HCT116 (cell line): ENCODE measurements at regions of chr7 and their contacts with region 1.

Region 1: DNA sequence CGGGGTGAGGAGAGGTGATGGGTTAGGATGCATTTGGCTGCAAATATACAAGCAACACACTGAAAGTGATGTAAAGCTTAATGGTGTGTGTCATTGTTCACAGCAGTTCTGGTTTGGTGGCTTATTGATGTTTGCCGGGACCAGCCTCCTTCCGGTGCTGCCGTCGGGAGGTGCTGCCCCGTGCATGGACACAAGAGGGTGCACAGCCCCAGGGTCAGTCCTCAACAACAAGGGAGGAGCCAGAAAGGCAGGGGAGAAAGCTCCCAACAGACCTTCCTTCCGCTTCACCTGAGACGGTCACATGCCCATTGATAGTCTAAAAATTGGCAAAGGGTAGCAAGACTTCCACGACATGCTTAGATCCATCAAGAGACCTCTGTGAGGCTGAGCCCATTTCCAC is 9.5 kb downstream of the RNF32 start:
- DNase-seq: peak; percentile 33
- ATAC-seq: peak; percentile 99
- H3K4me3 ChIP-seq: no peak overlapping the region
- H3K27ac ChIP-seq: no peak overlapping the region
- H3K4me1 ChIP-seq: 0 out of 4 replicates have a peak, but pooled peaks cover 0 to 7% of the 10 kb centered on the region in 2 experiments
- H3K27me3 ChIP-seq: no peaks in the 10 kb centered on the region
- CTCF ChIP-seq: peak; percentile 42 to 63 (median 61); a peak in 5 of 6 replicates
- POLR2A ChIP-seq: no peak
- RAD21 ChIP-seq: peak; percentile 70

Region 2: DNA sequence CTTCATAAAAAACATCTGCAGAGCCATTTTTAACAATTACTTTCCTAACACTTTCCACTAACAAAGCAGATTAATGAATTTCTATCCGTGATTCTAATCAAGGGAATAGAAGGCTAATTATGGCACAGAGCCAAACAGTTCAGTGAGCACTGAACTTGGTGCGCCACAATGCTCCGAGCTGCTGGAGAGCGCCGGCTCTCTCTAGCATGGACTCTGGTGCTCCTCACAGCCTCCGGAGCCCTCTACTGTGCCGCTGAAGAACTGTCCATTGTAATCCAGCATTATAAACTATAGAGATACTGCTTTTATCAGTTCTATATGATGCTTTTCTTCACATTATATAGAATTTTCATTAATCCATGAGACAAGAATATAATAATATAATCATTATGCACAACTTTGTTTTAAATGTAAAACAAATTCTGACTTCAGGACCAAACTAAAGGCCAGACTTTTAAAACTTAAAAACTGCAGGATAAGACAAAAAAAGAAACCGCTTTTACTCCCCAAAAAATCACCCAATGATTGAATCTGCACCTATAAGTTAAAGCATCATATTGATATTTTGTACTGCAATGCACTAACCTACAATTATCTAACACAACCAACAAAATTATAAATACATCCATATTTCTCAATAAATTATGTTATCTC is 114.1 kb after region 1 on chr7:
- CTCF ChIA-PET with region 1: no interaction called
- POLR2A ChIA-PET with region 1: no interaction called
- RAD21 ChIA-PET with region 1: no interaction called
- intact Hi-C with region 1: loop called (anchors 5 kb)
- DNase-seq: peak; percentile 45
- ATAC-seq: peak; percentile 100
- H3K4me3 ChIP-seq: no peak overlapping the region
- H3K27ac ChIP-seq: no peak overlapping the region
- H3K4me1 ChIP-seq: peaks cover 0 to 5% of the 10 kb centered on the region in 2 experiments; a peak in 1 of 4 replicates
- H3K27me3 ChIP-seq: no peaks in the 10 kb centered on the region
- CTCF ChIP-seq: peak; percentile 51 to 72 (median 63); a peak in 5 of 6 replicates
- POLR2A ChIP-seq: no peak
- RAD21 ChIP-seq: peak; percentile 81

Region 3: DNA sequence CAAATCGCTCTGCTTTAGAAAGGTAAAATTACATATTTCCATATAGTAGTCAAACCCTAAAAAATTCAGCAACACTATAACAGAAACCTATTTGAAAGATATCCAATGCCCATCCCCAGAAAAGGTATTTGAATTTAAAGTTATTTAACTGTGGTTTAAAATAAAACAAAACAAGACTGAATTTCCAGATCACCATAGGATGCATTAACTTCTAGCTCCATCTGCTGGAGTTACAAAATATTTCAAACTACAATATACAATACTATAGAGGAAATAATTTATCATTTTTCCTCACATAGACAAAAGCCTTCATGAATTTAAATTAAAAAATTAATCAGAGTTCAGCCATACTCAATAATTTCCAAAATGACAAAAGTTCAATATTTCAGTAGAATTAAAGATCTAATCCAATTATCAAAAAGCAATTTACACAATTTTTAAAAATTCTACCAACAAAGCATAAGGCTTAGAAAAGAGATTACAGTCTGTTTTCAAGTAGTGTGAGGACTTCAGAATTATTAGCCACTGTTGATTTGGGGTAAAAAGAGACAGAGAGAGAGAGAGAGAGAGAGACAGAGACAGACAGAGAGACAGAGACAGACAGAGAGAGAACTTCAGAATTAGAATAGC is 167.0 kb after region 1 on chr7:
- CTCF ChIA-PET with region 1: no interaction called
- POLR2A ChIA-PET with region 1: no interaction called
- RAD21 ChIA-PET with region 1: no interaction called
- intact Hi-C with region 1: loop called (anchors 2 kb)
- DNase-seq: no peak
- ATAC-seq: peak; percentile 74
- H3K4me3 ChIP-seq: no peak overlapping the region
- H3K27ac ChIP-seq: no peak overlapping the region
- H3K4me1 ChIP-seq: no peaks in the 10 kb centered on the region
- H3K27me3 ChIP-seq: no peaks in the 10 kb centered on the region
- CTCF ChIP-seq: peak; percentile 23 to 62 (median 51); a peak in 4 of 6 replicates
- POLR2A ChIP-seq: no peak
- RAD21 ChIP-seq: peak; percentile 75